Caco-2 (cell line): ENCODE measurements at regions of chr10 and their contacts with region 1.

Region 1: DNA sequence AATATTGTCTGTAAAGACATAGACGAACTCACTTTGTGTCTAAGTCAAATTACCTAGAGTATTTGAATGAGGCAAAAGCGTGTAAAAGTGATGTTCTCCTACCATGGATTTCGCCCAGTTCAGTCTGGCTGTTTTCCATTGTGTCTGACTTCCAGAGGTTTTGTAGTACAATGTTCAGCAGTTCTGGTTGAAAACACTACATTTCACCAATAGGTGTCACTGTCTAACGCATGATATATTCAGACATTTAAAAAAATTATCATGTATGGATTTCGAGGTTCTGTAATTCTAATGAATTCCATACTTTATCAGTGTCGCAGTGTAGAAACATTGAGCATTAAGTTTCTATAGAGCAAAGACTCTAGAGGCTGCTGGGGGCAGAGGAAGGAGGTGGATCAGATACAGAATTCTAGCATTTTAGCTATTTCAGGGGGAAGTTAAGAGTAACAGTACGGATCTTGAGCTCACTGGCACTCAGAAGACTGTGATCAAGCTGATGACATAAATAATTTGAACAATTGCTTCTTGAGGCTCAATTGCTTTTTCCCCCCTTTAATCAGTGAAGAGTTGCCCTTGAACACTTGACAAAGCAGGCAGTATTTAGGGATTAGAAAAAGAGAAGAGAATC is 196.9 kb upstream of the RHOBTB1 start:
- DNase-seq: peak in 1 of 2 experiments; percentile 64
- H3K4me3 ChIP-seq: no peak overlapping the region
- H3K4me3 Mint-ChIP-seq: no peak overlapping the region
- H3K27ac Mint-ChIP-seq: no peak overlapping the region
- H3K4me1 ChIP-seq: no peaks in the 10 kb centered on the region
- H3K4me1 Mint-ChIP-seq: no peaks in the 10 kb centered on the region
- H3K27me3 ChIP-seq: no peaks in the 10 kb centered on the region
- H3K27me3 Mint-ChIP-seq: peaks cover 15% of the 10 kb centered on the region
- CTCF ChIP-seq: peak; percentile 80 to 92

Region 2: DNA sequence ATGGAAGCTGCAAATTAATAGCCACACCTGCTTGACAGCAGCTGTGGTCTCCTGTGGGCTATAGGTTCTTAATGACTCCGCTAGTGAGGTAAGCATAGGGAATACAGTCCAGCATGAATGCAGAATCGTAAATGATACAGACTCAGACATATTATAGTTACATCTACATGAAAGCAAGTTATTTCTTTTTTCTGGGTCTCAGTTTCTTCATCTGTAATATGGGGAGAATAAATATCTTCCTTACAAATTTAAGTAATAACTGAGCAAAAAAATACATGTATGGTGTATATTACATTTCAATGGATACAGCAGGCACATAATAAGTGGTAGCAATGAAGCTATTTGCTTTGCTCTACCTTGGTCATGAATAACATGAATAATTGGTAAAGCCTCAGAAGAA is 49.0 kb after region 1 on chr10:
- CTCF ChIA-PET with region 1: interaction called, 6 read pairs
- POLR2A ChIA-PET with region 1: no interaction called
- intact Hi-C with region 1: loop called (anchors 1 kb)
- DNase-seq: no peak
- H3K4me3 ChIP-seq: no peak overlapping the region
- H3K4me3 Mint-ChIP-seq: no peak overlapping the region
- H3K27ac Mint-ChIP-seq: no peak overlapping the region
- H3K4me1 ChIP-seq: no peaks in the 10 kb centered on the region
- H3K4me1 Mint-ChIP-seq: peaks cover 7% of the 10 kb centered on the region
- H3K27me3 ChIP-seq: no peaks in the 10 kb centered on the region
- H3K27me3 Mint-ChIP-seq: no peaks in the 10 kb centered on the region
- CTCF ChIP-seq: no peak

Region 3: GRCh38 chr10:61296161-61296560 is 155.3 kb after region 1 on chr10:
- CTCF ChIA-PET with region 1: no interaction called
- POLR2A ChIA-PET with region 1: interaction called, 14 read pairs
- intact Hi-C with region 1: no loop called
- DNase-seq: no peak
- H3K4me3 ChIP-seq: no peak overlapping the region
- H3K4me3 Mint-ChIP-seq: no peak overlapping the region
- H3K27ac Mint-ChIP-seq: no peak overlapping the region
- H3K4me1 ChIP-seq: no peaks in the 10 kb centered on the region
- H3K4me1 Mint-ChIP-seq: no peaks in the 10 kb centered on the region
- H3K27me3 ChIP-seq: peaks cover 1% of the 10 kb centered on the region; the same call in 1 of the 2 replicates
- H3K27me3 Mint-ChIP-seq: peaks cover 17% of the 10 kb centered on the region
- CTCF ChIP-seq: no peak

Region 4: GRCh38 chr10:61415824-61416223 is 274.9 kb after region 1 on chr10:
- CTCF ChIA-PET with region 1: no interaction called
- POLR2A ChIA-PET with region 1: no interaction called
- intact Hi-C with region 1: no loop called
- DNase-seq: no peak
- H3K4me3 ChIP-seq: no peak overlapping the region
- H3K4me3 Mint-ChIP-seq: no peak overlapping the region
- H3K27ac Mint-ChIP-seq: no peak overlapping the region
- H3K4me1 ChIP-seq: no peaks in the 10 kb centered on the region
- H3K4me1 Mint-ChIP-seq: no peaks in the 10 kb centered on the region
- H3K27me3 ChIP-seq: no peaks in the 10 kb centered on the region; the same call in 1 of the 2 replicates
- H3K27me3 Mint-ChIP-seq: peaks cover 13% of the 10 kb centered on the region
- CTCF ChIP-seq: no peak

Region 5: GRCh38 chr10:61592581-61592980 is 451.7 kb after region 1 on chr10:
- CTCF ChIA-PET with region 1: no interaction called
- POLR2A ChIA-PET with region 1: no interaction called
- intact Hi-C with region 1: loop called (anchors 1 kb)
- DNase-seq: peak; percentile 70
- H3K4me3 ChIP-seq: no peak overlapping the region
- H3K4me3 Mint-ChIP-seq: no peak overlapping the region
- H3K27ac Mint-ChIP-seq: no peak overlapping the region
- H3K4me1 ChIP-seq: no peaks in the 10 kb centered on the region
- H3K4me1 Mint-ChIP-seq: peaks cover 6% of the 10 kb centered on the region
- H3K27me3 ChIP-seq: 0 out of 2 replicates have a peak, but pooled peaks cover 1% of the 10 kb centered on the region
- H3K27me3 Mint-ChIP-seq: peaks cover 21% of the 10 kb centered on the region
- CTCF ChIP-seq: peak; percentile 81 to 88